MCF 10A (cell line): ENCODE measurements at regions of chr1 and their contacts with region 1.

Region 1: DNA sequence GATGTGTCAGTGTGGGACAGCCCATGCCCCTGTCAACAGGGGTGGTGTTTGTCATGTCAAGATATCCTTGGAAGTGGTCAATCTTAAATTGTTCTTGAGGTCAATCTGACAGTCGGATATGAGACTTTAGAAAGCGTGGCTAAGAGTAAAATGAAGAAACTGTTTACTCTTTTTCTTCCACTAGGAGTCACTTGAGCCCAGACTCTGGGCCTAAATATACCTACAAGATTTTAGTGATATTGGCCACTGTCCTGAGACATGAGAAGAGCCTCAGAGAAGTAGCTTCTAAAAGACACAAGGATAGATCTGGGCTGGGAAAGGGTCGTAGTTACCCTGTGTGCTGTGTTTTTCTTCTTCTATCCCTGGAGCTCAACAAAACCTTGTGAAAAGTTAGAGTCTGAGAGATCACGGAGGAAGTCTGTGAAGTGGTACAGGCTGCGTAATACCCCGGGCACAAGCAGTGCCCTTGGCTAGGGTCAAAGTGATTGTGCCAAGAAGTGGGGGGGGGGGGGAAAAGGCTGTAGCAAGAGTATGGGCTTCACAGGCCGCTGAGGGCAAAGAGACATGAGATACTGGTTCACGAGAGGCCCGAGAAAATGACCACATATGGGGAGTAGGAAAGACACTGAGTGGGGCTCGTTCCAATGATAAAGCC is 355.2 kb upstream of the GREM2 start:
- DNase-seq: peak; percentile 60
- H3K4me3 Mint-ChIP-seq: no peak overlapping the region
- H3K27ac Mint-ChIP-seq: no peak overlapping the region
- H3K4me1 Mint-ChIP-seq: no peaks in the 10 kb centered on the region
- H3K27me3 Mint-ChIP-seq: no peaks in the 10 kb centered on the region
- CTCF ChIP-seq: peak; percentile 76

Region 2: GRCh38 chr1:239394107-239394506 is 1573.1 kb before region 1 on chr1:
- CTCF ChIA-PET with region 1: no interaction called
- POLR2A ChIA-PET with region 1: no interaction called
- intact Hi-C with region 1: no loop called
- DNase-seq: no peak
- H3K4me3 Mint-ChIP-seq: no peak overlapping the region
- H3K27ac Mint-ChIP-seq: no peak overlapping the region
- H3K4me1 Mint-ChIP-seq: peaks cover 4% of the 10 kb centered on the region
- H3K27me3 Mint-ChIP-seq: peaks cover 21% of the 10 kb centered on the region
- CTCF ChIP-seq: no peak

Region 3: DNA sequence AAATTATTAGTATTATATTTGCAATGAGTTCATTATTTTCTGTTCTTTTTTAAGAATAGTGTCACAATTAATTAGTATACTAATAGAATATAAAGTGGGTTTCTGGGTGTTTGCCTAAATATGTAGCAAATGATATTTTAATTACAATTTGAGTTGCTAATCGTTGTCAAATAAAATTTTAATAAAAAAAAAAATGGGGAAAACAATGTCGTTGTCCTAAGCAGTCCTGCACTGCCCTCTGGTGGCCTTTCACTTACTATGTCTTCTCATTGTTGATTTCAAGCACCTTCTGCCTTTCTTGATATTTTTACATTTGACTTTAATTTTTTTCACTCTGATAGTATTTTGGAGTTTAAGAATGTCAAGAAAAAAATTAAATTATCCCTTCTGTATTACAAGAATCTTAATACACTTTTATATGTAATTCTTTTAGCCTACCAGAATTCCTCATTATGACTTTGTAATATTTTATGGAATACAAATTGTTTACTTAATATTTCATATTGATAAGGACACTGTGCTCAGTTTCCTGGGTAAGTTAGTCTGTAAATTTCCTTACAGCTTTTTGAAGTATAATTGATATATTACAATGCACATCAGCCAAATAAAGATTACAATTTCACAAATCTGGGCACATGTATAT is 980.0 kb before region 1 on chr1:
- CTCF ChIA-PET with region 1: interaction called, 10 read pairs
- POLR2A ChIA-PET with region 1: no interaction called
- intact Hi-C with region 1: no loop called
- DNase-seq: peak; percentile 75
- H3K4me3 Mint-ChIP-seq: no peak overlapping the region
- H3K27ac Mint-ChIP-seq: no peak overlapping the region
- H3K4me1 Mint-ChIP-seq: no peaks in the 10 kb centered on the region
- H3K27me3 Mint-ChIP-seq: no peaks in the 10 kb centered on the region
- CTCF ChIP-seq: peak; percentile 97

Region 4: GRCh38 chr1:240178366-240178765 is 788.8 kb before region 1 on chr1:
- CTCF ChIA-PET with region 1: no interaction called
- POLR2A ChIA-PET with region 1: no interaction called
- intact Hi-C with region 1: no loop called
- DNase-seq: no peak
- H3K4me3 Mint-ChIP-seq: no peak overlapping the region
- H3K27ac Mint-ChIP-seq: no peak overlapping the region
- H3K4me1 Mint-ChIP-seq: peaks cover 6% of the 10 kb centered on the region
- H3K27me3 Mint-ChIP-seq: no peaks in the 10 kb centered on the region
- CTCF ChIP-seq: no peak

Region 5: DNA sequence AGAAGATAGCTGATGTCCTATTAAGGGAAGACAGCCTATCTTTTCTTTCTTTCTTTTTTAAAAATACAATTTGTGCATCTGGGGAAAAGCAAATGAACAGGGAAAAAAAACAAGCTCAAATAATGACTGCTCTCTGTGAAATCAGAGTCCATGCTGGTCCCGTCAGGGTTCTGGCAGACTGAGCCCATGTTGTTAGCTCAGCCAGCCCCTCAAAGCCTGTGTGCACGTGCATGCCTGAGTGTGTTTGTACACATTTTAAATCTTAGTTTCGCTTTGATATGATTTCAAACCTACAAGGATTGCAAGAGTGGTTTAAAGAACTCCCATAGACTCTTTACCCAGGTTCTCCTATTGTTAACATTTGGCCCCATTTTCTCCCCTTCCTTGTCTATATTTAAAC is 123.4 kb before region 1 on chr1:
- CTCF ChIA-PET with region 1: no interaction called
- POLR2A ChIA-PET with region 1: no interaction called
- intact Hi-C with region 1: no loop called
- DNase-seq: no peak
- H3K4me3 Mint-ChIP-seq: no peak overlapping the region
- H3K27ac Mint-ChIP-seq: no peak overlapping the region
- H3K4me1 Mint-ChIP-seq: peaks cover 7% of the 10 kb centered on the region
- H3K27me3 Mint-ChIP-seq: no peaks in the 10 kb centered on the region
- CTCF ChIP-seq: no peak

Region 6: DNA sequence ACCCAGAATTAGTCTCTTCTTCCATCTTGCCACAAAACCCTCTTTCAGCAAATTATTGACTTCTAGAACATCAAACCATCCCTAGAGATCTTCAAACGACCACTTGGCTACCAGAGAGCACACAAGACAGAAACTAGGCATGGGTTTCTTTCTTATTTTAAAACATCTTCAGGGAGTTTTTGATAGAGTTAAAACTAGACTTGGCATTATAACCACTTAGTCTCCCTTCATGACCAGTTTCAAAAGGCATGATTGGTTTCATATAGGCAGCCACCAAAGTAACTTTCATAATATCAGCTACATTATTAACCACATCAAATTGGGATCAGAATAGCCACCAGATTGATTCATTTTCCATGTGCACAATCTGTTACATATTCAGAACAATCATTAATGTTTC is 13.1 kb after region 1 on chr1:
- CTCF ChIA-PET with region 1: interaction called, 20 read pairs
- POLR2A ChIA-PET with region 1: interaction called, 4 read pairs
- intact Hi-C with region 1: no loop called
- DNase-seq: no peak
- H3K4me3 Mint-ChIP-seq: no peak overlapping the region
- H3K27ac Mint-ChIP-seq: no peak overlapping the region
- H3K4me1 Mint-ChIP-seq: no peaks in the 10 kb centered on the region
- H3K27me3 Mint-ChIP-seq: no peaks in the 10 kb centered on the region
- CTCF ChIP-seq: no peak

Region 7: DNA sequence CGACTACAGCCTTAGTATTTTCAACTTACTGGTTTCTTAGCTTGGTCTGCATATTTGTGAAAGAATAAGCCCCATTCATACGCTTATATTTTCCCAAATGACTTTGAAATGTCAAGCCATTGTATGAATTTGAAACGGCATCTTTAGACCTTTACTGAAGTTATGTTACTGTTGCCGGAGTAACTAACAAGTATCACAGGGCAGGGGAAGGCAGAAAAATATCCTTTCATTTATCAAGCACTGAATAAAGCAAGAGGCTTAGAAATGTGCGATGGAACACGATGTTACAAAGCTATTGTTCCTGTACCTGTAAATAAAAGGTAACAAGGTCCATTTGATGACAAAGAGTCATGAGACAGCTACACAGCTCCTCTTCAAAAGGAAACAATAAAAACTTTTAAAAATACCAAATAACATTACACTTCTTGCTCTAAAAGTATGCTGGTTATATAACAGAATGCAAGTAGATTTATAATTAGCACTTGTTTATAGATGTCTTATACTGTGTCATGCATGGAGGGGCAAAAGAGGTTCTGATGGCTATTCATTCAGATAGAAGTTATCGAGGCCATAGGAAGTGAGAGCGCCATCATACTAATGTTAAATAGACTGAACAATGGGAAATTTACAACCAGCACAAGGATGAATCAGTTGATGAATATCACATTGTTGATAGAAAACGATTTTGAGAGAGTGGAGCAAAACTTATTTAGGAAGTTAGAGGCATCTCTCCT is 67.2 kb after region 1 on chr1:
- CTCF ChIA-PET with region 1: no interaction called
- POLR2A ChIA-PET with region 1: no interaction called
- intact Hi-C with region 1: no loop called
- DNase-seq: no peak
- H3K4me3 Mint-ChIP-seq: no peak overlapping the region
- H3K27ac Mint-ChIP-seq: no peak overlapping the region
- H3K4me1 Mint-ChIP-seq: no peaks in the 10 kb centered on the region
- H3K27me3 Mint-ChIP-seq: no peaks in the 10 kb centered on the region
- CTCF ChIP-seq: no peak

Region 8: GRCh38 chr1:241311056-241311746 is 344.0 kb after region 1 on chr1:
- CTCF ChIA-PET with region 1: interaction called, 3 read pairs
- POLR2A ChIA-PET with region 1: no interaction called
- intact Hi-C with region 1: loop called (anchors 1 kb)
- DNase-seq: peak; percentile 79
- H3K4me3 Mint-ChIP-seq: peak overlapping the region; percentile 0
- H3K27ac Mint-ChIP-seq: peak overlapping the region; percentile 37
- H3K4me1 Mint-ChIP-seq: peaks cover 15% of the 10 kb centered on the region
- H3K27me3 Mint-ChIP-seq: no peaks in the 10 kb centered on the region
- CTCF ChIP-seq: peak; percentile 62

Region 9: DNA sequence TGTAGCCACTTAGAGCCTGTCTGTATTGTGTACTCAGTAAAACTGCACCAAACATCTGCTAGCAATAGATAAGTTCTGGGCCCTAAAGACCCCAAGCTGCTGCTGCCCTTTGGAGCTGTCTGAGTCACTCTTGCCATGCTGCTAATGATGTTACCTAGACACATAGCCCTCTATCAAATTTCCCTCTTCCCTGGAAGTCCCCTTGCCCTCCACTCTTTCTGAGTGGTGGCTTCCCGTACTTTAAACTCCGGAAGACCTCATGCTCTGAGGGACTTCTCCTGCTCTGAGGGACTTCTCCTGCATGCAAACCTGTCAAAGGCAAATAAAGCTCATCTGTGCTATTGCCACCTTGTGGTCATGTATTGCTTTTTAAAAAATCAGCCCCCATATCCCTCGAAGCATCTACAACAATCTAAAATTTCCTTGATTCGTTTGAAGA is 518.4 kb after region 1 on chr1:
- CTCF ChIA-PET with region 1: interaction called, 80 read pairs
- POLR2A ChIA-PET with region 1: no interaction called
- intact Hi-C with region 1: loop called (anchors 1 kb)
- DNase-seq: peak; percentile 64
- H3K4me3 Mint-ChIP-seq: no peak overlapping the region
- H3K27ac Mint-ChIP-seq: no peak overlapping the region
- H3K4me1 Mint-ChIP-seq: peaks cover 26% of the 10 kb centered on the region
- H3K27me3 Mint-ChIP-seq: no peaks in the 10 kb centered on the region
- CTCF ChIP-seq: peak; percentile 63

Region 10: GRCh38 chr1:241627453-241628259 is 660.5 kb after region 1 on chr1:
- CTCF ChIA-PET with region 1: interaction called, 5 read pairs
- POLR2A ChIA-PET with region 1: no interaction called
- intact Hi-C with region 1: loop called (anchors 5 kb)
- DNase-seq: peak; percentile 92
- H3K4me3 Mint-ChIP-seq: no peak overlapping the region
- H3K27ac Mint-ChIP-seq: peak overlapping the region; percentile 52
- H3K4me1 Mint-ChIP-seq: peaks cover 58% of the 10 kb centered on the region
- H3K27me3 Mint-ChIP-seq: no peaks in the 10 kb centered on the region
- CTCF ChIP-seq: peak; percentile 80